Heart left ventricle (tissue), 16 donors: ENCODE measurements at regions of chr2 and their contacts with region 1.

Region 1: DNA sequence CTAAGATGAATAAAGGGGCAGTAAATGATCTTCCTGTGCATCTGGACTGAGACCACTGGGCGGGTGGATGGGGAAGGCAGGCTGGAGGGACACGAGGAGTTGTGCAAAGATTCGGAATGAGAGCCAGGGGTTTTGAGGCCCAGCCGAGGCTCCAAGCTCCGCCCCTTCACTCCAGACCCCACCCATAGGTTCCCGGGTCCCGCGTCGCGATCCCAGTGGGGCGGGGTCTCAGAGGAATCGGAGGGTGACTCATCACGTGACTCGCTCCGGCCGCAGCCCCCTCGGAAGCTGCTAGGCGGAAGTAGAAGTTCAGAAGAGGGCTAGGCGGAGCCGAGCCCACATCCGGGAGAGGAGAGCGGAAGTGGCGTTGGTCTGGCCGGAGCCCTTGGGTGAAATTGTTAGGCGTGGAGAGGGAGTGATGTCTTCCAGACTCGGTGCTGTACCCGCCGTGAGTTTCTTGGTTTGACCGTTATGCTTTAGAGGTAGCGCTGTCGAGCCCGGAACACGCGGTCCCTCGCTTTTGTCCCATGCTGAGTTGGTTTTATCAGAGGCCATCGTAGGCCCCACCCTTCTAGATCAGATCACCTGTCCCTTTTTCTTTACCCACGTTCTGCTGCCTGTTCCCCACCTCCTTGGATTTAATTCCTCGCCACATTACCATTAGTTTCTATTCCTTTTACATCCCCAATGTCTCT is at the start of gene ZNF512:
- DNase-seq: peak; percentile 87 to 94 (median 93)
- ATAC-seq: peak; percentile 95 to 98 (median 98)
- H3K4me3 ChIP-seq: peak within 1 kb of the TSS; percentile 36 to 81 (median 65)
- H3K27ac ChIP-seq: peak within 1 kb of the TSS in 11 of 12 donors; percentile 1 to 83 (median 68)
- H3K4me1 ChIP-seq: peaks cover 3 to 31% (median 16%) of the 10 kb centered on the region in 12 donors
- H3K27me3 ChIP-seq: no peaks in the 10 kb centered on the region
- CTCF ChIP-seq: peak in 2 of 12 donors; percentile 18 to 20
- POLR2A ChIP-seq: peak in 1 of 2 donors; percentile 62
- total RNA-seq, gene ZNF512: 13.2 to 31.8 (median 20.1) TPM

Region 2: DNA sequence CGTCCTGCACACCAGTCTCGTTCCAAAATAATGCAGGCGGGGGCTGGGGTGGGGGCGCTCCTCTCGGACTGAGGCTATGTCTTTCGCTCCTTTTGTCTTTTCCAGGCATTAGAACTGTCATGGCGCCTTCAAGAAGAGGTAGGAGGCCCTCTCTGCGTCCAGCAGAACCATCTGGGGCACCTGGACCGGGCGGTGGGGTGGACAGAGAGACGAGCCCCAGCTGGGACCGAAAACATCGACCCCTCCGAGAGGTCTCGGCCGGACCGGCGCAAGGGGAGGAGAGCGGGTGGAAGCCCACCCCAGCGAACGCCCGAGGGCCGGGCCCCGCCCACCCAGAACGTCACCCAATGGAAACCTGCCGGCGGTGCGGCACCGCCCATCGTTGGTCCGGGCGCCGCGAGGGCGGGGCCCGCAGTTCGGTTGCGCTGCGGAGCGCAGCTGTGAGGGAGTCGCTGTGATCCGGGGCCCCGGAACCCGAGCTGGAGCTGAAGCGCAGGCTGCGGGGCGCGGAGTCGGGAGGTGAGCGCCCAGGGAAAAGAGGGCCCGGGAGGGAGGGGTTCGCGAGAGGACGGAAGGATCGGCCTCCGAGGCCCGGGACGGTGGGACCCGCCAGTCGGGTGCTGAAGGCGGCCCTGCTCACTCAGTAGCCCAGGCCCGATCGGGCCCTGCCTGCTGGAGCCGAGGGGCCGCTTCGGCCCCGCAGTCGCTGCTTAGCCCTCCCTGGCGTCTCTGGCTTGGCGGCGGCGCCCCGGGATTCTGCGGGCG is 154.4 kb before region 1 on chr2 and contains the start of gene NRBP1:
- intact Hi-C with region 1: loop called in 1 of 10 experiments (anchors 5 kb)
- DNase-seq: peak; percentile 92 to 98 (median 95)
- ATAC-seq: peak; percentile 96 to 98 (median 96)
- H3K4me3 ChIP-seq: peak within 1 kb of the TSS; percentile 60 to 100 (median 96)
- H3K27ac ChIP-seq: peak within 1 kb of the TSS; percentile 93 to 100 (median 98)
- H3K4me1 ChIP-seq: peaks cover 4 to 46% (median 31%) of the 10 kb centered on the region in 12 donors
- H3K27me3 ChIP-seq: no peaks in the 10 kb centered on the region
- CTCF ChIP-seq: peak in 1 of 12 donors; percentile 3
- POLR2A ChIP-seq: peak; percentile 4 to 91
- total RNA-seq, gene NRBP1: 43.5 to 78.6 (median 62.8) TPM

Region 3: GRCh38 chr2:27489498-27490397 is 93.1 kb before region 1 on chr2 and contains the start of gene IFT172:
- intact Hi-C with region 1: loop called in 4 of 10 experiments (anchors 2 to 10 kb)
- DNase-seq: peak; percentile 98 to 99 (median 99)
- ATAC-seq: peak; percentile 98 to 100 (median 98)
- H3K4me3 ChIP-seq: peak within 1 kb of the TSS; percentile 28 to 80 (median 70)
- H3K27ac ChIP-seq: peak within 1 kb of the TSS in 11 of 12 donors; percentile 44 to 83 (median 66)
- H3K4me1 ChIP-seq: peaks cover 0 to 25% (median 16%) of the 10 kb centered on the region in 12 donors
- H3K27me3 ChIP-seq: peaks cover 0 to 11% (median 0%) of the 10 kb centered on the region in 9 donors
- CTCF ChIP-seq: no peak
- POLR2A ChIP-seq: peak in 1 of 2 donors; percentile 60
- total RNA-seq, gene IFT172: 13.6 to 25.7 (median 17.4) TPM

Region 4: GRCh38 chr2:27494944-27495554 is 87.8 kb before region 1 on chr2 and contains the start of gene FNDC4:
- intact Hi-C with region 1: loop called in 5 of 10 experiments (anchors 2 to 10 kb)
- DNase-seq: peak in 4 of 5 donors; percentile 18 to 67 (median 28)
- ATAC-seq: peak in 3 of 4 donors; percentile 24 to 64 (median 46)
- H3K4me3 ChIP-seq: peak within 1 kb of the TSS; percentile 45 to 84 (median 60)
- H3K27ac ChIP-seq: peak within 1 kb of the TSS in 2 of 12 donors; percentile 19 to 32
- H3K4me1 ChIP-seq: peaks cover 0 to 22% (median 6%) of the 10 kb centered on the region in 12 donors
- H3K27me3 ChIP-seq: peaks cover 0 to 32% (median 8%) of the 10 kb centered on the region in 9 donors
- CTCF ChIP-seq: no peak
- POLR2A ChIP-seq: no peak
- total RNA-seq, gene FNDC4: 1.0 to 4.7 (median 3.1) TPM

Region 5: GRCh38 chr2:27628767-27629709 is 46.2 kb after region 1 on chr2 and contains the starts of genes CCDC121 and GPN1:
- intact Hi-C with region 1: loop called in 1 of 10 experiments (anchors 2 kb)
- DNase-seq: peak; percentile 84 to 92 (median 88)
- ATAC-seq: peak; percentile 93 to 98 (median 97)
- H3K4me3 ChIP-seq: peak within 1 kb of the TSS; percentile 66 to 95 (median 84)
- H3K27ac ChIP-seq: peak within 1 kb of the TSS in 11 of 12 donors; percentile 50 to 86 (median 77)
- H3K4me1 ChIP-seq: peaks cover 0 to 39% (median 21%) of the 10 kb centered on the region in 12 donors
- H3K27me3 ChIP-seq: no peaks in the 10 kb centered on the region
- CTCF ChIP-seq: no peak
- POLR2A ChIP-seq: peak in 1 of 2 donors; percentile 54
- total RNA-seq, gene CCDC121: 3.9 to 7.7 (median 5.8) TPM
- total RNA-seq, gene GPN1: 14.4 to 22.3 (median 19.4) TPM

Region 6: DNA sequence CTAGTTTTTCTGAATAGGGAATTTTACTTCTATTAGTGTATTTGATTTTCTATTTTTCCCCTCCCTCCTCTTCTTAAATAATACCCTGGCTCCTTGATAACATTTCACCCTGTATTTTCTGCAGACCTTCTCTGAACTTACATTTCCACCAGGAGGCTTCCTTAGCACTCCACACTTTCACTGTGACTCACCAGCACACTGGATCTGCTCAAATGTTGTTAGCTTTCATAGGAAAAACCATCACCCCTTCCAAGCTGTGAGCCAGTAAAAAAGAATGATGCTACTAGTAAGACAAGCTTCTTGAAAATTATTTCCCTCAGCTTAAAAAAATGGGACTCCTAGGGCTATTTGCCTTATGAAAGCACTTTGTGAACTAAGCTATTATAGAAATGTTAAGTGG is 64.4 kb after region 1 on chr2:
- intact Hi-C with region 1: no loop called
- DNase-seq: no peak
- ATAC-seq: no peak
- H3K4me3 ChIP-seq: no peak overlapping the region
- H3K27ac ChIP-seq: no peak overlapping the region
- H3K4me1 ChIP-seq: no peaks in the 10 kb centered on the region
- H3K27me3 ChIP-seq: no peaks in the 10 kb centered on the region
- CTCF ChIP-seq: no peak
- POLR2A ChIP-seq: no peak